HepG2 (cell line): ENCODE measurements at regions of chr19 and their contacts with region 1.

Region 1: DNA sequence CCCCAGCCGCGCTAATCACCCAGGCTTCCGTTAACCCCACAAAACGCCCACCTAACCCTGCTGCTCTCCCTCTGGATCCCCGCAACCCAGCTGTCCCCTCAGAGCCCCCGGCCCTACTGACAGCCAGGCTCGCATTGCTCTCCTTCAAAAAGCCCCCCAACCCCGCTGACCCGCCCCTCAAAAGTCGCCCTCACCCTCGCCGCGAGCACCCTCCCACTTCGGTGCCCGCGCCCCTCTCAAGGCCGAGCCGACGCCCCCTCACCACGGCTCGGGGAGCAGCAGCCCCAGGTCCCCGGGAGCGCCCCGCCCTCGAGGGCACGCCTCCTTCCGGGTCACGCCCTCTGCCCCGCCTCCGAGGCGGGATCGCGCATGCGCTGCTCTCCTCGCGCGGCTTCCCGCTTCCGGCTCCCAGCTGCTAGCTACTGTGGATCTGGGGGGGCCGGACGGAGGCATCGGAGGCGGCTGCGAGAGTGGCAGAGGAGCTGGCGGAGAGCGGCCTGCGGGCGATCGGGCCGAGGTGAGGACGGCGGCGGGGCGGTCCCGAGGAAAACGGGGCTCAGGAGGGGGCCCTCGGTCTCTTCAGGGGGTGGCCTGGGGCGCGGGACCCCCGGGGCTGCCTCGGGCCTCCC is 46.1 kb downstream of the ARHGEF18 start:
- DNase-seq: peak; percentile 73
- ATAC-seq: peak; percentile 71
- H3K4me3 ChIP-seq: peak overlapping the region; percentile 88 to 99 (median 95)
- H3K27ac ChIP-seq: peak overlapping the region; percentile 51
- H3K4me1 ChIP-seq: peaks cover 67% of the 10 kb centered on the region
- H3K27me3 ChIP-seq: no peaks in the 10 kb centered on the region; a peak in 2 of 5 replicates
- CTCF ChIP-seq: peak; percentile 46
- EP300 ChIP-seq: no peak
- POLR2A ChIP-seq: peak in 1 of 2 experiments; percentile 74; a peak in 2 of 4 replicates
- RAD21 ChIP-seq: 0 out of 2 replicates have a peak, but pooled peaks have one; percentile 14

Region 2: DNA sequence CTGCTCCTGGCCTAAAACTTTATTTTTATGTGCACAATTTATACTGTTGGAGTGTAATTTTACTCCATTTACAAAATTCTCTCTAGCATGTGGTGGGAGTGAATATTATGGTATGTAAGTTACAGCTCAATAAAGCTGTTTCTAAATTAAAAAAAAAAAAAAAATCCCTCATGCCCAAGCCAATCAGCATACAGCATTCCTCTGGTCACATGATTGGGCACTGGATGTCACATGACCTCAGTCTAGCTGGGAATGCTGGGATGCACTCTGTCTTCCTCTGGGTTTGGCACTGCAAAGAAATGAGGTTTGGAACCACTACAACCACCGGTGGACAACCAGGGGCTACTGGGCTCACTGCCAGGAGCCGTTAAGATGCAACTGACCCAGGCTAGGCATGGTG is 257.7 kb before region 1 on chr19:
- CTCF ChIA-PET with region 1: no interaction called
- POLR2A ChIA-PET with region 1: interaction called, 4 read pairs
- in situ Hi-C with region 1: no loop called
- intact Hi-C with region 1: loop called (anchors 5 kb)
- DNase-seq: no peak
- ATAC-seq: no peak
- H3K4me3 ChIP-seq: no peak overlapping the region
- H3K27ac ChIP-seq: no peak overlapping the region
- H3K4me1 ChIP-seq: peaks cover 27% of the 10 kb centered on the region
- H3K27me3 ChIP-seq: no peaks in the 10 kb centered on the region
- CTCF ChIP-seq: no peak
- EP300 ChIP-seq: no peak
- POLR2A ChIP-seq: no peak
- RAD21 ChIP-seq: no peak

Region 3: GRCh38 chr19:7415163-7415858 is 20.5 kb after region 1 on chr19:
- CTCF ChIA-PET with region 1: no interaction called
- POLR2A ChIA-PET with region 1: interaction called, 12 read pairs
- in situ Hi-C with region 1: no loop called
- intact Hi-C with region 1: no loop called
- DNase-seq: peak; percentile 74
- ATAC-seq: peak; percentile 86
- H3K4me3 ChIP-seq: peak overlapping the region in 2 of 3 experiments; percentile 15 to 35; a peak in 3 of 6 replicates
- H3K27ac ChIP-seq: peak overlapping the region; percentile 61
- H3K4me1 ChIP-seq: peaks cover 14% of the 10 kb centered on the region
- H3K27me3 ChIP-seq: no peaks in the 10 kb centered on the region
- CTCF ChIP-seq: peak; percentile 18
- EP300 ChIP-seq: peak in 1 of 2 experiments; percentile 64; a peak in 1 of 4 replicates
- POLR2A ChIP-seq: no peak
- RAD21 ChIP-seq: no peak

Region 4: GRCh38 chr19:7497292-7497691 is 102.4 kb after region 1 on chr19:
- CTCF ChIA-PET with region 1: no interaction called
- POLR2A ChIA-PET with region 1: interaction called, 6 read pairs
- in situ Hi-C with region 1: no loop called
- intact Hi-C with region 1: loop called (anchors 10 kb)
- DNase-seq: no peak
- ATAC-seq: peak; percentile 44
- H3K4me3 ChIP-seq: no peak overlapping the region
- H3K27ac ChIP-seq: no peak overlapping the region
- H3K4me1 ChIP-seq: peaks cover 30% of the 10 kb centered on the region
- H3K27me3 ChIP-seq: peaks cover 0 to 5% of the 10 kb centered on the region in 2 experiments; a peak in 3 of 5 replicates
- CTCF ChIP-seq: peak; percentile 31
- EP300 ChIP-seq: no peak
- POLR2A ChIP-seq: no peak
- RAD21 ChIP-seq: no peak